Tibial artery (tissue), 4 donors: ENCODE measurements at regions of chr7 and their contacts with region 1.

Region 1: DNA sequence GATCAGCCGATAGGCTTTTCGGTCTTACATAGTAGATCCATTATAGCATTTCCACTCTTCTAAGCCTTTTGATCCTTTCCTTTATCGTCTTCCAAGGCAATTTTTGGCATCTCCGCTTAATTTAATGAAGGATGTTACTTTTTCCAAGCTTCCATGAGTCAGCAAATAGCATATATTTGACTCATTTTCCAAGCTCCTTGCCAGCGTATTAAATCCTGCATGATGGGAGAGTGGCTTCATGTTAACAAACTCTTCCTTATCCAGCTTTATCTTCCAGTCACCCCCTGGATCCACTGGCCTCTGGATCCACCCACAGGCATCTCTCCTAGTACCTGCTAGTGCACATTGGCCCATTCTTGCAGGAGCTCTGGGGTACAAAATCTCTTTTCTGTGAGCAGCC is 13.0 kb downstream of the OR9A2 start:
- DNase-seq: no peak
- H3K4me3 ChIP-seq: no peak overlapping the region
- H3K27ac ChIP-seq: no peak overlapping the region
- H3K4me1 ChIP-seq: peaks cover 0 to 14% (median 8%) of the 10 kb centered on the region in 4 donors
- H3K27me3 ChIP-seq: no peaks in the 10 kb centered on the region
- CTCF ChIP-seq: no peak

Region 2: DNA sequence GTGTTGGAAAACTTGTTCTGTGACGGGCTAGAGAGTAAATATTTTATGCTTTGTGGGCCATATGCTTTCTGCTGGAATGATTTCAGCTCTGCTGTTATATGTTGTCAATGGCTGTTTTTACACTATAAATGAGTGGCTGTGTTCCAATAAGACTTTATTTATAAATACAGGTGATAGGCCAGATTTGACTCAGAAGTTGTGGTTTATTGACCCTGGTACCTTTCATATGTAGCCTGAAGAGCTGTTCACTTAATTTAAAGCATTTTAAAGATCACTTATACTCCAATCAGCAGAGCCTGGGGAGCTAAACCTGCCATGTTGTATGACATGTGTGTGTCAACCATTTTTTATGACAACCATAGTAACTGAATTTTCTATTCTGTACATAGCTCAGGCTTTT is 1284.9 kb before region 1 on chr7:
- intact Hi-C with region 1: loop called (anchors 5 kb)
- DNase-seq: no peak
- H3K4me3 ChIP-seq: no peak overlapping the region
- H3K27ac ChIP-seq: no peak overlapping the region
- H3K4me1 ChIP-seq: no peaks in the 10 kb centered on the region
- H3K27me3 ChIP-seq: no peaks in the 10 kb centered on the region
- CTCF ChIP-seq: no peak